Cardiac septum (tissue), 1 donor: ENCODE measurements at regions of chr4 and their contacts with region 1.

Region 1: GRCh38 chr4:15231265-15232091 is 196.4 kb upstream of the C1QTNF7 start:
- DNase-seq: peak; percentile 82

Region 2: DNA sequence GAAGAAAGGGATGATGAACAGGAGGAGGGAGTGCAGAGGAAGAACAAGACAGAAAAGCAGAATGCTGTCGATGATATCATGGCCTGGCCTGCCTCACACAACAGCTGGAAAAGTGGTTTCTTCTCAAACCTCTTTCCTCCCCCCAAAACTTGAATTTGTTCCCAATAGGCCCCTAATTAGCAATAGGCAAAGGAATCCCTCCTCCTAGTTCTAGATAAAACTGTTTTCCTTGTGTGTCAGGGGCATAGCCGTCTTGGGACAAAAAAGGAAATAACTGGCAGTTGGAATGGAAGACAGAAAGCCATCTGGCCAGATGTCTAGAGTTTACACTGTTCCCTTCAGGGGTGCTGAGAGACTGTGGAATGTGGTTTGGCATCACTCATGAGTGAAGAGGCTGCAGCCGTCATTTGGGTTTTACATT is 18.6 kb after region 1 on chr4:
- intact Hi-C with region 1: loop called (anchors 1 kb)
- DNase-seq: no peak

Region 3: GRCh38 chr4:15327311-15328298 is 96.1 kb after region 1 on chr4:
- intact Hi-C with region 1: no loop called
- DNase-seq: no peak

Region 4: GRCh38 chr4:15410750-15411149 is 179.3 kb after region 1 on chr4:
- intact Hi-C with region 1: loop called (anchors 5 kb)
- DNase-seq: no peak

Region 5: DNA sequence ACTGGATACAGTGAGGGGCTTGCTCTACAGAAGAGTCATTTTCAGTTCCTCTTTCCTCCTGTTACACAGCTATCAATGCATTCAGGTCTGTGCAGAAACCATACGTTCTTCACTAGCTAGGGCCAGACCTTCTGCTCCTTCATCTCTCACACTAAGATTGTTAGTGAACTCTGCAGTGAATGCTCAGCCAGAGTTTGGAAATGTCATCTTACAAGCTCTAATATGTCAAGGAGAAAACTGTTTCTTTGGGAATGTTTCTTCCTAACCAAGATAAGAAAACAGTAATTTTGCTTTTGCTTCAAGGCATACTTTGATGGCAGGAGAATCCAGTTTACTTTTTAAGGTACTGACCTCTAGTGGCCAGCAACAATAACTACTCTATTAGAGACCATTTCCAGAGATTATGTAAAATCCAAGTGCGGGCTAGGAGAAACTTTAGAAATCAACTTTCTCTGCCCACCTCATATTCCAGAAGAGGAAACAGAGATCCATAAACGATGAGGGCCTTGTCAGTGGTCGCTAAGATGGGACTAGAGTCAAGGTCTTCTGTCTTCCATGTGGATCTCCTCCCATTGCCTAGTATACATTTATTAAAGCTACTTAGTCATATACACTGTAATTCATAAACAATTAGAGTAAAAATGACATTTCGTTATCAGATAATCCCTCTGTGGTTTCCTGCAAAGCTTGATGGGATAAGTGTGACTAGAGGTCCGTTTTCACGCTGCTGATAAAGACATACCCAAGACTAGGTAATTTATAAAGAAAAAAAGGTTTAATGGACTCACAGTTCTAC is 226.1 kb after region 1 on chr4:
- intact Hi-C with region 1: loop called (anchors 2 kb)
- DNase-seq: no peak

Region 6: DNA sequence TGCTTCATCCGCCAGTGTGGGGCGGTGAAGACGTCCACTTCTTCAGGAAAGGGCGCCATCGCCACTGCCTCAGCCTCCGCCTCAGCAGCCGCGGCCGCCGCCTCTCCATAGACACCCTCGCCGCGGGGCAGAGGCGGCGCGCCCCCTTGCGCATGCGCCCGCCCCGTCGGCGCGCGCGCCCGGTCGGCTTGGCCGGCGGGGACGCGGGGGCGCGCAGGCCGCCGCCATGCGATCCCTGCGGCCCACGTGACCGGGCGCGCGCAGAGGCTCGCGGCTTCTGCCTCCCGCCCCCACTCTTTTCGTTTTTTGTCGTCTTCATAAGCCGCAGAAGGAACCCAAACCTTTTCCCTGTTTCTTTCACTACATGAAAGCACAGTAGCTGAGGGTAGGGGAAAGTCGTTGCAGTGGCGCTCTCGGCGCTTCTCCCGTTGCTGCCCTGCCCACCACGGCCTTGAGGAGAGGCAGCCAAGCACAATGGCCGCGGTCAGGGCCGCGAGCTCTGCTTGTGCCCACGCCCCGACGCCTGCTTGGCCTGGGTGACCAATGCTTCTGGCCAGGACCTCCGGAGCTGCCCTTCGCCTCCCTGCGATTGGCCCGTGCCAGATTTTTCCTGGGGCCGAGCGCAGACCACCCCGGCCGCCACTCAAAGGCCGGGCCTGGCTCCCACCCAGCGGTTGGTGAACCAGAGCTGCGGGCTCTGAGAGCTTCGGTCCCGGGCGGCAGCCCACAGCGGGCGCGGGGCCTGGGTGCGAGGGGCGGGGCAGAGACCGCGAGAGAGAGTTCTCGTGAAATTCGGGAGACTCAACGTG is 424.0 kb after region 1 on chr4 and contains the start of gene FBXL5:
- intact Hi-C with region 1: loop called (anchors 10 kb)
- DNase-seq: peak; percentile 92
- total RNA-seq, gene FBXL5: 60.9 TPM